ENCODE measurements at regions of chr7 and their contacts with region 1.

Region 1: DNA sequence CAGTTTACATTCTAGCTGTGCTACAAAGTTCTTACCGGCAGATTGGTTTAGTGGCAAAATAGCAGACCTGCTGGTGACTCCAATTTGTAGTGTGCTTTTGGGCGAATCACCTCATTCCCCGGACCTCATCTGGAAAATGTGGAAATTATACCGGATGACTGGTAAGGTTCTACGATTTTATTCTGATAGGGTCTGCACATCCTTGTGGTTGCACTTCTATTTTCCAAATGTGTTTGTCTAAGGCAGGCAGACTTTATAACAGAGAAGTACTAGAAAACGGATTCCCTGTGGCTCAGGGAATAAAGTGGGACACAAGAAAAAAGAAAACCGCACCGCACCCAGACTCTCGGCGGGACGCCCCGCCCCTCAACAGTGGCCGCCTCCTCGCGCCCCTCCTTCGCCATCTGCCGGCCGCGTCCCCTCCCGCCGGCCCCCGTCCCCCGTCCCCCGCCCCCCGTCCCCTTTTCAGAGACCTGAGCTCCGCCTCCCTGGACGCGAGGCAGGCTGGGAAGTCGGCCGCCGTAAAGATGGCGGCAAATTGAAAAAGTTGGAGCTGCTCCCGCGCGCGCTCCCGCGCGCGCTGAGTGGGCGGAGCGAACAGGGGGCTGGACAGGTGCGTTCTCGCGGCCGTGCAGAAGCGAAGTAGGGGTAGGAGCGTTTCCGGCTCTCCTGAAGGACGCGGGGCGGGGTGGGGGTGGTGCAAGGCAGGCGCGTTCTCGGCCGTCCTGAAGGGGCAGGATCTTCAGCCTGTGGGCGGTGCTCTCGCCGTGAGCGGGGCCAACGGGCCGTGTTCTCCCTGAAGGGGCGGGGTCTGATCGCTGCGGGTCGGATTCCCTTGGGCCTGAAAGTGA is 531 bp upstream of the CCM2 start:
- DNase-seq: peak; percentile 91 to 100 (median 99)

Region 2: DNA sequence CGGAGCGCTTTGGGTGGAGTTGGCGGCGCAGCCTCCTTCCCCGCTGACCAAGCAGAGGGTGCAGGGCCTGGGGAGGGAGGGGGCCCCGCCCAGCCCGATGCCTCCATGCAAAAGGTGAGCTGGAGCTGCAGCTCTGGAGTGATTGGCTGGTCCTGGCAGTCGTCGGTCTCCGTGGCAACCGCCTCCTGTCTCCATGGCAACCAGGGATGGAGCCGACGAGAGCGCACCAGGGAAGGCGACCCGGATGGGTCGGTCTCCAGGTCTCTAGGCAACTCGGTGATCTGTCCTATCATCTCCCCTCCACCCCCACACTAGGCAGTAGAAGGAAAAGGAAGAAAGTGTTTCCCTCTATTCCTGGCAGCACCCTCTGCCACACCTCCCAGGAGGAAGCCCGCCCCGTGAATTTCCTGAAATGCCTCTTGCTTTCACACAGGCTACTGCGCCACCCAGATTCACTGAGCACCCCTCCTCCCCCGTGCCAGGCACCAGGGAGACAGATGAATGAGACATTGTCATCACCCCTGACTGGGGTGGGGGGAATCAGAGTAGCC is 89.9 kb after region 1 on chr7:
- intact Hi-C with region 1: loop called (anchors 1 kb)
- DNase-seq: peak; percentile 94 to 99 (median 97)